WTC11 (cell line): ENCODE measurements at regions of chr2 and their contacts with region 1.

Region 1: DNA sequence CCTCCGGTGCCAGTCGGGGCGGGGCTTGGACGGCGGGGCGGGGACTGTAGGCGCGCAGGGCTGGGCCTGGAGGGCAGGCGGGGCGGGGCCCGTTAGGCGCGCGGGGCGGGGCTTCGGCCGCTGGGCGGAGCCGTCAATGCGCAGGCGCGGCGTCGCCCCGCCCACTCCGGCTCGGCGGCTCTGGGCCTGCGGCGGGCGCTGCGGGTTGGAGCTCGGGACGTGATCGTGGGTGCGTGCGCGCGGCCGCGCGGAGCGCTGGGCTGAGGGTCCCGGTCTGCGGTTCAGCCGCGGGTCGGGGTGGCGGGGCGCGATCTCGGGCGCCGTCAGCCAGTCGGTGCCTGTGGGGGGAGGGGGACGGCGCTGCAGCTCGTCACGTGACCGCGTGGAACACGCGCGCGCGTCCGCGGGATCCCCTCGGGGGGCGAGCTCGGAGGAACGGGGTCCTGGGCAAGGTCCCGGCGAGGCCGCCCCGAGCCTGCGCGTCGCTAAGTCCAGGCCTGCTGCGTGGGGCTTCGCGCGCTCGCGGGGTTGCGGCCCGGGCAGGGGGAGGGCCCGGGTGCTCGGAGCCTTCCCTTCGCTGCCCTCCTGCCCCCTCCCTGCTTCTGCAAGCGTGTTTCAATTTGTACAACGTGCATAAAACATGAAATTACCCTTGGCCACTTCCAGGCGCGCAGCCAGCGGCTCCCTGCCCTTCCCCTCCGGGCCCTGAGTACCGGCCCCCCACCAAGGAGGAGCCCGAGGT is at the start of gene D2HGDH:
- DNase-seq: peak; percentile 96
- ATAC-seq: peak; percentile 96
- H3K4me3 Mint-ChIP-seq: peak within 1 kb of the TSS; percentile 79
- H3K27ac Mint-ChIP-seq: no peak within 1 kb of the TSS
- H3K4me1 Mint-ChIP-seq: no peaks in the 10 kb centered on the region
- H3K27me3 Mint-ChIP-seq: peaks cover 14% of the 10 kb centered on the region
- CTCF ChIP-seq: no peak
- total RNA-seq, gene D2HGDH: 22.7 to 28.1 TPM (median 26.8 TPM) in 3 replicates

Region 2: GRCh38 chr2:241702132-241703031 is 32.3 kb before region 1 on chr2:
- CTCF ChIA-PET with region 1: interaction called, 12 read pairs
- POLR2A ChIA-PET with region 1: interaction called, 3 read pairs
- DNase-seq: peak; percentile 92
- ATAC-seq: peak; percentile 73
- H3K4me3 Mint-ChIP-seq: peak overlapping the region; percentile 83
- H3K27ac Mint-ChIP-seq: peak overlapping the region; percentile 22; the same call in 1 of the 2 replicates
- H3K4me1 Mint-ChIP-seq: peaks cover 12% of the 10 kb centered on the region
- H3K27me3 Mint-ChIP-seq: no peaks in the 10 kb centered on the region
- CTCF ChIP-seq: no peak

Region 3: DNA sequence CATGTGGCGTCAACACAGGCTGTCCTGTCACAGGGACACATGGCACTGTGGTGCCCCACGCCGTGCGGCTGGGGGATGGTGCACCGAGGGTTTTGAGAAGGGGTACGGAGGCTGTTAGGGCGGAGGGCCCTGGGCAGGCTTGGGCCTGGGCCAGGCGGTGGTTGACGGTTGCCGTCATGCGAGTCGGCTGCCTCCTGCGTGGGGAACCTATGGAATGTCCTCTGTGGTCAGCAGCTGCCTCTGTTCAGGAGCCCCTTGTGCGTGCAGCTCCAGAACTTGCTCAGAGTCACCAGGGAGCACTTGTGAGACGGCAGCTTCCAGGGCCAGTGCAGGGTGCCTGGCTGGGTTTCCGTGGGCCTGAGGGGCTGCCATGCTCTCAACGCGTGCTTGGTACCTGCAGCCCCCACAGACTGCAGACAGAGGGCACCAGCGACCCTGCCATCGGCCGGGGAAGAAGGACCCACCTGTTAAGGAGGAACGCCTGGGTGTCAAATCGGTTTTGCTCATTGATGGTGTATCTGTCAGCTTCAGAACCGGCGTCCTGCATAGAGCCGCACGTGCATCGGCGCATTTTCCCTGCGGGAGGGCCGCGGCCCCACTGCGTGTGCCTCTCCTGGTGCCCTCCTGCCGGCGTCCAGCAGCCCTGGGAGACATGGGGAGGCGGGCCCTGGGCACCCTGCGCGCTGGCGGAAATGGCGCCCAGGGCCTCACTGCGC is 10.2 kb before region 1 on chr2:
- CTCF ChIA-PET with region 1: interaction called, 11 read pairs
- POLR2A ChIA-PET with region 1: no interaction called
- DNase-seq: peak; percentile 72
- ATAC-seq: peak; percentile 88
- H3K4me3 Mint-ChIP-seq: no peak overlapping the region
- H3K27ac Mint-ChIP-seq: no peak overlapping the region
- H3K4me1 Mint-ChIP-seq: no peaks in the 10 kb centered on the region
- H3K27me3 Mint-ChIP-seq: no peaks in the 10 kb centered on the region
- CTCF ChIP-seq: peak; percentile 29; the same call in 1 of the 2 replicates